ENCODE measurements at regions of chr1 and their contacts with region 1.

Region 1: GRCh38 chr1:36342481-36343478 is 19.3 kb upstream of the EVA1B start:
- DNase-seq: peak; percentile 76
- H3K4me3 Mint-ChIP-seq: no peak overlapping the region
- H3K27ac Mint-ChIP-seq: no peak overlapping the region
- H3K4me1 Mint-ChIP-seq: peaks cover 20% of the 10 kb centered on the region
- H3K27me3 Mint-ChIP-seq: no peaks in the 10 kb centered on the region

Region 2: GRCh38 chr1:36175137-36176095 is 167.4 kb before region 1 on chr1:
- CTCF ChIA-PET with region 1: no interaction called
- DNase-seq: no peak
- H3K4me3 Mint-ChIP-seq: no peak overlapping the region
- H3K27ac Mint-ChIP-seq: no peak overlapping the region
- H3K4me1 Mint-ChIP-seq: no peaks in the 10 kb centered on the region
- H3K27me3 Mint-ChIP-seq: no peaks in the 10 kb centered on the region

Region 3: DNA sequence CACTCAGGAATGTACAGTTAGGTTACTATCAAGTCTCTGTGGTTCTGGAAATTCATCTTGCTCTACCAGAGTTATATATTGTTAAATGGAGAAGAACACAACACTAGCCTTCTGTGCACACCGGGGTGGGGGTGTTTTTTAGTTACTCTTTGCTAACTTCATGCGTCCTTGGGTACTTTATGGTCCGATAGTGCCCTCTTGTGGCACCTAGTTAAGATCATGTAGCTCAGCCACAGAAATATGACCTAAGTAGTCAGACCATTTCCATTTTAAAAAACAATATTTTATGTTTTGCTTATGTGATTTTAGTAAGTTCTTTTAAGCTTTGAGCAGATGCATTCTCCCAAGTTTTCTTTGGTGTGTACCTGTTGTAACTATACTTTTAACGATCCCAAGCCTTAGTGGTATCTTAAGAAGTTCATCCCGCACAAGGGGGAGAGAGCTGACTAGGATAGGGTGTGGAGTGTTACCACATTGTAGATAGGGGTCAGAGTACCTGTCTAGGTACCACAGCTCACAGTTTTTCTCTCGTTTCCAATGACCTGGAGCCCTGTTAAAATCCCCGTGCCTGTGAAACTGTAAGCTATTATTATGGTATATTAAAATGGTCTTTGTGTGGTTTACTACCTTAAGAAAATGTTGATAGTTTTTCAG is 57.2 kb before region 1 on chr1:
- CTCF ChIA-PET with region 1: no interaction called
- DNase-seq: peak; percentile 77
- H3K4me3 Mint-ChIP-seq: no peak overlapping the region
- H3K27ac Mint-ChIP-seq: peak overlapping the region; percentile 83
- H3K4me1 Mint-ChIP-seq: peaks cover 18% of the 10 kb centered on the region
- H3K27me3 Mint-ChIP-seq: no peaks in the 10 kb centered on the region

Region 4: GRCh38 chr1:36300526-36300925 is 42.3 kb before region 1 on chr1:
- CTCF ChIA-PET with region 1: no interaction called
- DNase-seq: no peak
- H3K4me3 Mint-ChIP-seq: no peak overlapping the region
- H3K27ac Mint-ChIP-seq: peak overlapping the region; percentile 8
- H3K4me1 Mint-ChIP-seq: peaks cover 16% of the 10 kb centered on the region
- H3K27me3 Mint-ChIP-seq: no peaks in the 10 kb centered on the region

Region 5: GRCh38 chr1:36369061-36369861 is 26.5 kb after region 1 on chr1:
- CTCF ChIA-PET with region 1: interaction called, 83 read pairs
- DNase-seq: peak; percentile 89
- H3K4me3 Mint-ChIP-seq: no peak overlapping the region
- H3K27ac Mint-ChIP-seq: peak overlapping the region; percentile 96
- H3K4me1 Mint-ChIP-seq: peaks cover 78% of the 10 kb centered on the region
- H3K27me3 Mint-ChIP-seq: no peaks in the 10 kb centered on the region

Region 6: DNA sequence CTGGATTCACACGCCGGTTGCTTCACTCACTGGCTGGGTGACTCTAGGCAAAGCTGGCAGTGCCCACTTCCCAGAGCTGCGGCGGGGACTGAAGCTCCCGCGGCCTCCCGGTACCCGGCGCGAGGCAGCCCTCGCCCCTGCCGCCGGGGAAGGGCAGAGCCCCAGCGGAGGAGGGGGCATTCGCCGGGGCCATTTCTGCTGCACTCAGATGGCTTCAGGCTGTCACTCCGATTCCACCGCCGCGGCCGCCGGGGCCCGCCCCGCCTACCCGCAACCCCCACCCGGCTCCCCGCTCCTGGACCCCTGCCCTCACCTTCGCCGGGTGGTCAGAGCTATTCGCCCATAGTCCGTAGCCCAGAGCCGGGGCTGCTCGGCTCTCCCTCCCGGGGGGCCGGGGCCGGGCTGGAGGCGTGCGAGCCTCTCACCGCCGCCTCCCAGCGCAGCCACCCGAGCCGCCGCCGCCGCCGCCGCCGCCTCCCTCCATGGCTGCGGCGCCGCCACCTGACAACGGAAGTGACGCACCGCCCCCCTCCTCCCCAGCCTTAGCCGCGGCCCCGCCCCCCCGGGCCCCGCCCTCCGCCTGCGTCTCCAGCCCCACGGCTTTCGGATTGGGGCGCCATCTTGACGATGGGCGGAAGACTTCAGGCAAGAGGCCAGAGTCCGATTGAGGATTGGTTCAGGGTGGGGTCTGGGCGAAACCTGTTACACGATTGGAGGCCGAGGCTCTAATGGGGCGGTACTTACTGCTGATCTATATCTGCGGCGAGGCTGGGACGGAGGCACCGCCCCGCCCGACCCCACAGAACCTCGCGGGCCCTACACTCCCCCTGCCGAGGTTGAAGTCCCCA is 42.9 kb after region 1 on chr1 and contains the start of gene STK40:
- CTCF ChIA-PET with region 1: interaction called, 11 read pairs
- DNase-seq: peak; percentile 98
- H3K4me3 Mint-ChIP-seq: peak within 1 kb of the TSS; percentile 75
- H3K27ac Mint-ChIP-seq: peak within 1 kb of the TSS; percentile 100
- H3K4me1 Mint-ChIP-seq: peaks cover 59% of the 10 kb centered on the region
- H3K27me3 Mint-ChIP-seq: no peaks in the 10 kb centered on the region

Region 7: DNA sequence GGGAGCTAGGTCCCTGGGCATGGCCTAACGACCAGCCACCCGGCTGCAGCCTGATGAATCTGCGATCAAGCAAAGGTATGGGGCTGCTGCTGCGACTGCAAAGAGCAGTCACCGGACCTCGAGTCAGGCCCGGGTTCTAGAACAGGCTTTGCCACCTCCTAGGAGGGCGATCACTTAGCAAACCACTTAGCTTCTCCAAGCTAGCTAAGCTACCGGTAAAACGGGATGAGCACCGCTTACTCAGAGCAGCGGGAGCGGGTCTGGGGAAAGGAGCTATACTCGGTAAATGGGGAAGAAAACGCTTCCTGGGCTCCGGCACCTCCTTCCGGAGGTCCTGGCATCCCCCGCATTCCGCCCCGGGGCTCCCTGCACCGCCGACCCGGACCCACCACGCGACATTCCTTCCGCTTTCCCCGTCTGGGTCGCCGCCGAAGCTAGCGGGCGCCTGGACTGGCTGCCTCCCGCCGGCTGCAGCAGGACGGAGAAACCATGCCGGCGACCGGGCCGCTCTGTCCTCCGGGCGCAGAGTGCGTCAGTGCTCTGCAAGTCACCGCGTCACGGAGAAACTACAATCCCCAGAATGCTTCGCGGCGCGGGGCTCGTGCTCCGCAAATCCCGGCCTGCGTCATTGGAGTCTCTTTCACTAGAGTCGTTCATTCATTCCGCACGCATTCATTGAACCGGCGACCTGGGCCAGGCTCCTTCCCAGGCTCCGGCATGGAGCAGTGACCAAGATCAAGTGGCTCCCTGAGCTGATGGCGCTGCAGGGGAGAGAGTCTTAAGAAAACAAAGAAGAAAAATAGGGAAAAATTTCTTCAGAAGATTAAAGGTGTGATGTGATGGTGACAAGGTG is 54.8 kb after region 1 on chr1 and contains the start of gene LSM10:
- CTCF ChIA-PET with region 1: interaction called, 10 read pairs
- DNase-seq: peak; percentile 95
- H3K4me3 Mint-ChIP-seq: peak within 1 kb of the TSS; percentile 96
- H3K27ac Mint-ChIP-seq: peak within 1 kb of the TSS; percentile 95
- H3K4me1 Mint-ChIP-seq: peaks cover 36% of the 10 kb centered on the region
- H3K27me3 Mint-ChIP-seq: no peaks in the 10 kb centered on the region

Region 8: GRCh38 chr1:36411674-36412520 is 69.1 kb after region 1 on chr1:
- CTCF ChIA-PET with region 1: interaction called, 27 read pairs
- DNase-seq: peak; percentile 70
- H3K4me3 Mint-ChIP-seq: no peak overlapping the region
- H3K27ac Mint-ChIP-seq: peak overlapping the region; percentile 88
- H3K4me1 Mint-ChIP-seq: peaks cover 25% of the 10 kb centered on the region
- H3K27me3 Mint-ChIP-seq: peaks cover 4% of the 10 kb centered on the region

Region 9: DNA sequence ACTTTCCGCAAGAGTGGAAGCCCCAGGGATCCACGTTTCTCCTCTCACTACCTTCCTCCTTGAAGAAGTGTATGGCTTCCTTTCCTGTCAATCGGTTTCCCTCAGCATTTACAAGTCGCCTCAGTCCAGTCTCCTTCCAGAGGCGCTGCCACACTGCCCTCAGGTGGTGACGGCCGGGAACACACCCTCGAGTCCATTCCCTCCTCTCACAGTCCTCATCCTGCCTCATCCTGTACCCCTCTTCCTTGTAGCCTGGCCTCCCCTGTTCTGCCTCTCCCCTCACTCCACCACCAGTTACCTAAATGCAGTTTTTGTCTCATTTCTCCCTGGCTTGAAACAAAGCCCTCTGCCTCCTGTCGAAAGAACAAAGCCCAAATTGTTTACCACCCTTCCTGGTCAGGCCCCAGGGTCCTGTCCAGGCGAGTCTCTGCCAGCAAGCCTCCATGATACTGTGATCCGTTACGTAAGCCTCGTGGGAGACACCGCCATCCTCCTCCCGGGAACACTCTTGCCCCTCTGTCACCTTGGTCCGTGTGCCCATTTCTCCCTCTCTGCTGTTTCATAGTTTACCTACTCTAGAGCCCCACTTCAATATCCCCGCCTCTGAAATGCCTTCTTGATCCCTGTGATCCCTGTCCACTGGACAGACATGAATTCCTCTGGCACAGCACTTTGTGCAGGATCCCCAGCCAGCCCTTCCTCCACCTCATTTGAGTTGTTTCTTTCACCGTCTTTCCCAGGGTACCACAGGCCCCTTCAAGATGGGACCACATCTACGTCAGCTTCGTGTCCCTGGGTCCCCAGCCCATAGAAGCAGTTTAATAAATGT is 78.3 kb after region 1 on chr1:
- CTCF ChIA-PET with region 1: interaction called, 51 read pairs
- DNase-seq: peak; percentile 94
- H3K4me3 Mint-ChIP-seq: peak overlapping the region; percentile 44
- H3K27ac Mint-ChIP-seq: peak overlapping the region; percentile 67
- H3K4me1 Mint-ChIP-seq: peaks cover 18% of the 10 kb centered on the region
- H3K27me3 Mint-ChIP-seq: peaks cover 4% of the 10 kb centered on the region